ENCODE measurements at regions of chr17 and their contacts with region 1.

Region 1: GRCh38 chr17:13099089-13099735 is 81.4 kb upstream of the ELAC2 start:
- DNase-seq: no peak
- ATAC-seq: peak; percentile 68
- H3K4me3 Mint-ChIP-seq: no peak overlapping the region
- H3K27ac Mint-ChIP-seq: no peak overlapping the region
- H3K4me1 Mint-ChIP-seq: peaks cover 12% of the 10 kb centered on the region
- H3K27me3 Mint-ChIP-seq: peaks cover 28% of the 10 kb centered on the region
- CTCF ChIP-seq: no peak

Region 2: GRCh38 chr17:13114601-13115031 is 15.4 kb after region 1 on chr17:
- CTCF ChIA-PET with region 1: interaction called, 12 read pairs
- POLR2A ChIA-PET with region 1: no interaction called
- DNase-seq: peak; percentile 69
- ATAC-seq: peak; percentile 99
- H3K4me3 Mint-ChIP-seq: peak overlapping the region; percentile 24
- H3K27ac Mint-ChIP-seq: no peak overlapping the region
- H3K4me1 Mint-ChIP-seq: peaks cover 3% of the 10 kb centered on the region; the same call in 1 of the 2 replicates
- H3K27me3 Mint-ChIP-seq: no peaks in the 10 kb centered on the region; the same call in 1 of the 2 replicates
- CTCF ChIP-seq: peak; percentile 70

Measured in WTC11 (cell line).